IMR-90 (cell line): ENCODE measurements at regions of chr1 and their contacts with region 1.

Region 1: GRCh38 chr1:234373064-234373958 is at the start of gene COA6:
- DNase-seq: peak; percentile 97
- ATAC-seq: peak; percentile 86
- H3K4me3 ChIP-seq: peak within 1 kb of the TSS; percentile 64
- H3K27ac ChIP-seq: peak within 1 kb of the TSS; percentile 90
- H3K4me1 ChIP-seq: no peaks in the 10 kb centered on the region
- H3K27me3 ChIP-seq: no peaks in the 10 kb centered on the region
- CTCF ChIP-seq: no peak
- POLR2A ChIP-seq: peak; percentile 79
- RAD21 ChIP-seq: no peak
- total RNA-seq, gene COA6: 6.8 and 18.6 TPM in 2 replicates

Region 2: DNA sequence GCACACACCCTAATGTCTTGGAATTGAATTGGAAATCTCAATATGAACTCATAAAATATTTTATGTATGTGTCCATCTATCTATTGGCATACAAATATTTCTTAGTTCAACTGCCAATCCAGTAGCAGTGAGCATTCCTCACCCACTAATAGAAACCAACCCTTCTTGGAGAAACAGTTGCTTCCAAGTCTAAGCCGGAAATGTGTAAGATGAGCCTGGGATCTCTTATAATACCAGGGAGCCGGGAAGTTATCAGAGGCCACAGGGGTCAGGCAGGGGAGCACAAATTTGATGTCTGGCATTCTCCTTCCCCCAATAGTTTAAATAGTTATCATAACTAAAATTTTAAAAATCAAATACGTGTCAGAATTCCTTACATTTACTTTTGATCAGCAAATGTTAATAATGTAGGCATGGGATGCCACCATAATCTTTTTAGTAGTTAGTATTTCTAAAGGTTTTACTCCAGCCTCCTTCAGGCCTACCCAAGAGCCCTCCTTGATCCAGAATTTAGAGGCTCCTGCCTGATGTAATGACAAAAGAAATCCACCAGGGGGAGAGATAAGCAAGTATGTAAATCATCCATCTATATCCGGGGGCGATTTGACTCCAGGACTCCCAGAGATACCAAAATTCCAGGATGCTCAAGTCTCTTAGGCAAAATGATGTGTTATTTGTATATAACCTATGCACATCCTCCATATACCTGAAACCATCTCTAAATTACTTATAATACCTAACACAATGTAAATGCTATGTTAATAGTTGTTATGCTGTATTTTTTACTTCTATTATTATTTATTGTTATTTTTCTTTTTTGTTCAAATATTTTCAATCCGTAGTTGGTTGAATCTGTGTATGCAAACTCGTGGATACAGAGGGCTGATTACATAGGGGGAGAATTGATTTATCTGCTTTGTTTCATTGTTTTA is 218.7 kb before region 1 on chr1:
- CTCF ChIA-PET with region 1: no interaction called
- POLR2A ChIA-PET with region 1: no interaction called
- dilution Hi-C with region 1: no loop called
- in situ Hi-C with region 1: no loop called
- intact Hi-C with region 1: loop called (anchors 1 kb)
- DNase-seq: peak; percentile 73
- ATAC-seq: peak; percentile 97
- H3K4me3 ChIP-seq: no peak overlapping the region
- H3K27ac ChIP-seq: no peak overlapping the region
- H3K4me1 ChIP-seq: peaks cover 4% of the 10 kb centered on the region; the same call in 1 of the 2 replicates
- H3K27me3 ChIP-seq: no peaks in the 10 kb centered on the region; the same call in 1 of the 2 replicates
- CTCF ChIP-seq: peak; percentile 58
- POLR2A ChIP-seq: no peak
- RAD21 ChIP-seq: peak; percentile 44

Region 3: DNA sequence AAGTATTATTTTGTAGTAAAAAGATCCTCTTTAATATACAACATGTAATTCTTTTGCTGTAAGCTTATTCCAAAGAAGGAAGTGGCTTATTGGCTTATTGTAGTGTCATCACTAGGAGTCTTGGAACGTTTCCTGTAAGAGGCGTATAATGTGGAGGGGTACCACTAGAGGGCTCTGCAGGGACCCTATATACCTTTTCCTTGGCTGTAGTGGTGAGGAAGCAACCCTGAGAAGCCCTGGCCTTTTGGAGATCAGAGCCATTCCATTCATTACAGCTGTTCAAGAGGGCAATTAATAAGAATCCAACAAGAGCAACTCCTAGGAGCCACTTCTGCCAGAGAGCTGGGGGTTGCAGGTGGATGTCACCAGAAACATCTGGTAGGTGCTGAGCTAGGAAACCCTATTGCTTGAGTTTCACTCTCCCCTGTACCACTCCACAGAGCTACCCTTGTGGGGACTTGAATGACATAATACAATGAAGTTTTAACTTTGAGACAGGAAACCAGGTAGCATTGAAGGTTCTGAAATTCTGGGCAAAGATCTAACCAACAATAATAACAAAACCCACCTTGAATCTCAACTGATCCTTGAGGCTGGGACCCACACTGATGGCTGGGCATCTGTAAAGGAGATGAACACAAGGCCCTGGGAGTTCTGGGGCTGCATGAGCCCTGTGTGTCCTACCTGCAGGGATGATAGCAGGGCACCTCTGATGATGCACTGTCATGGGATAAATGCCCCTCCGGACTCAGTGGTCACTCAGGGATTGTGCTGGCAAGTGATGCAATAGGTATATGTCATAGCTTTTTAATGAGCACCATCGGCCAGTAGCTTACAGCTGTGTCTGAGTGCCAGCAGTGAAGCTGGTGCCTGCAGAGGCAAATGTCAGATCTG is 160.3 kb before region 1 on chr1:
- CTCF ChIA-PET with region 1: no interaction called
- POLR2A ChIA-PET with region 1: no interaction called
- dilution Hi-C with region 1: no loop called
- in situ Hi-C with region 1: no loop called
- intact Hi-C with region 1: loop called (anchors 5 kb)
- DNase-seq: peak; percentile 26
- ATAC-seq: no peak
- H3K4me3 ChIP-seq: no peak overlapping the region
- H3K27ac ChIP-seq: no peak overlapping the region
- H3K4me1 ChIP-seq: no peaks in the 10 kb centered on the region
- H3K27me3 ChIP-seq: peaks cover 8% of the 10 kb centered on the region
- CTCF ChIP-seq: peak; percentile 29; the same call in 1 of the 2 replicates
- POLR2A ChIP-seq: no peak
- RAD21 ChIP-seq: no peak